Pancreas (tissue), 10 donors: ENCODE measurements at regions of chrX and their contacts with region 1.

Region 1: DNA sequence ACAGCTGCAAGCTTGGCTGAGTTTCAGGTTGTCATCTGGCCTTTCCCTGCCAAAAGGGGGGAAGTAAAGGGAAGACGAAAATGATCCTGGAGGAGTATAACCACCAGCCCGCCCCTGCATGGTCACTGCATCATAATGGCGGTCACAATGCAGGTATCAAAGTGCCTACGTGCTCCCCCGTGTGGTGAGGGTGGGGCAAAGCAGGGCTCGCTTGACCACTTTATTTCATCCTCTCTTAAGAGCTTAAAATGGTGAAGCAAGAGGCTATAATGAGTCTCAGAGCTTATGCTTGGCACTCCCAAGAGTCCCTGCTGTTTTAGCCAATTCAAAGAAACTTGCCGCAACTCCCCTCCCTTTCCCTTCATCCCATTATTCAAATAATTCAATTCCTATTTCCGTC is 105.6 kb downstream of the APOOL start:
- DNase-seq: peak in 4 of 6 donors; percentile 3 to 41 (median 33)
- ATAC-seq: peak in 3 of 4 donors; percentile 40 to 77 (median 63)
- H3K4me3 ChIP-seq: no peak overlapping the region
- H3K27ac ChIP-seq: no peak overlapping the region
- H3K4me1 ChIP-seq: no peaks in the 10 kb centered on the region
- H3K27me3 ChIP-seq: peaks cover 0 to 9% (median 0%) of the 10 kb centered on the region in 4 donors
- CTCF ChIP-seq: peak in 2 of 4 donors; percentile 34 to 39

Region 2: GRCh38 chrX:85203461-85203970 is 94.3 kb after region 1 on chrX:
- intact Hi-C with region 1: no loop called
- DNase-seq: peak in 2 of 6 donors; percentile 32 to 36
- ATAC-seq: no peak
- H3K4me3 ChIP-seq: no peak overlapping the region
- H3K27ac ChIP-seq: no peak overlapping the region
- H3K4me1 ChIP-seq: no peaks in the 10 kb centered on the region
- H3K27me3 ChIP-seq: peaks cover 0 to 7% (median 0%) of the 10 kb centered on the region in 4 donors
- CTCF ChIP-seq: no peak

Region 3: GRCh38 chrX:85544609-85545008 is 435.4 kb after region 1 on chrX:
- intact Hi-C with region 1: loop called in 1 of 3 experiments (anchors 10 kb)
- DNase-seq: no peak
- ATAC-seq: no peak
- H3K4me3 ChIP-seq: no peak overlapping the region
- H3K27ac ChIP-seq: no peak overlapping the region
- H3K4me1 ChIP-seq: no peaks in the 10 kb centered on the region
- H3K27me3 ChIP-seq: no peaks in the 10 kb centered on the region
- CTCF ChIP-seq: peak; percentile 20 to 38 (median 29)

Region 4: DNA sequence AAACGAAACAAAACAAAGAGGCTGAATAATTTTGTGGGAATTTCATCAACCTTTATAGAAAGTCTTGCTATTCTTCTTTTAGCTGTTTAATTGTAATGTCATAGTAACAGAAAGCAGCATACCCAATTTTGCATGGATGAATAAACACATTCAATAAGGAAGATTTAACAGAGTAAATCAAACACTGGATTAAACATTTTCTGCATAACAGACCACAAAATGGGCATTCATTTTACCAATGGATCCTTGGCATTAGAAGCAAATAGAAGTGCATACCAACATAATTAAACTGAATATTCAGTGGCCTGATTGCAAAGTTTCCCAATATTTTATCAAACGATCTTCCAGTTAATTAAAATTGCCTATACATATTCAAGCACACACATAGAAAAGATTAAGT is 942.5 kb after region 1 on chrX:
- intact Hi-C with region 1: no loop called
- DNase-seq: no peak
- ATAC-seq: no peak
- H3K4me3 ChIP-seq: no peak overlapping the region
- H3K27ac ChIP-seq: no peak overlapping the region
- H3K4me1 ChIP-seq: no peaks in the 10 kb centered on the region
- H3K27me3 ChIP-seq: peaks cover 0 to 16% (median 5%) of the 10 kb centered on the region in 4 donors
- CTCF ChIP-seq: no peak